ENCODE measurements at regions of chr5 and their contacts with region 1.

Region 1: GRCh38 chr5:174418928-174419796 is 305.2 kb upstream of the MSX2 start:
- DNase-seq: peak; percentile 87 to 93 (median 90)
- H3K4me3 ChIP-seq: peak overlapping the region in 1 of 7 experiments; percentile 11
- H3K27ac ChIP-seq: no peak overlapping the region
- H3K4me1 ChIP-seq: peaks cover 0 to 6% (median 0%) of the 10 kb centered on the region in 4 experiments
- H3K27me3 ChIP-seq: peaks cover 2 to 23% (median 10%) of the 10 kb centered on the region in 5 experiments

Region 2: DNA sequence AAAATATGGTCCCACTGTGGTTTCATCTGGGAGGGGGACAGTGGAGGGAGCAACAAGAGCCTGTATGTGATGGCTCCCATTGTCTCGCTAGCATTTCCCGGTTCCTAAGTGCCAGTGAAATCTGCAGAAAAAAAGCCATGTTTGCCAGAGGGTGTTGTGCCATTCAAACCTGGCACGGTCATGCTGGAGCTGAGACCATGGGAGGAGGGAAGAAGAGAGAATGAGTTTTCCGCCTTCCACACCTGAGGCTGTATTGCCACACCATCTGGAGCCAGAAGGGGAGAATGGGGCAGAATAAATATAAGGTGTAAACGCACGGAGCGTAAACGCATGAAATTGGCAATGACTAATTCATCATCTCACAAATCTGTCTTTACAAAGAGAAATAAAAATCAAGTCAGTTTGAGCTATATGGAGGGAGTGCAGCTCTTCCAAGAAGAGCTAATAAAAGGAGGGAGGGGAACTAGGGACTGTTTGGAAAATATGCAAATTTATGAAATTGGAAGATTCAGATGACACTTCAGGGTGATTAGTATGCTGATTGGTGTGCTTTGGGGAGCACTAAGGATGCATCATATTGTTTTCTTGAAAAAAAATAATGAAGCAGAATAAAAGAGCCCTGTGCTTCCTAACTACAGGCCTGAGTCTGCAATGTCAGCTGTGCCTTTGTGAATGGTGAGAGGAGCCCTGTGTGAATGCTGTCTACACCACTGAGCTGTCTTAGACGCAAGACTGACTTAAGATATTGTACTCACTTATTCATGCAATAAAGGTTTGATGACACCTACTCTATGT is 135.8 kb before region 1 on chr5:
- CTCF ChIA-PET with region 1: no interaction called
- POLR2A ChIA-PET with region 1: no interaction called
- DNase-seq: no peak
- H3K4me3 ChIP-seq: no peak overlapping the region
- H3K27ac ChIP-seq: no peak overlapping the region
- H3K4me1 ChIP-seq: no peaks in the 10 kb centered on the region
- H3K27me3 ChIP-seq: peaks cover 0 to 14% (median 0%) of the 10 kb centered on the region in 5 experiments

Region 3: DNA sequence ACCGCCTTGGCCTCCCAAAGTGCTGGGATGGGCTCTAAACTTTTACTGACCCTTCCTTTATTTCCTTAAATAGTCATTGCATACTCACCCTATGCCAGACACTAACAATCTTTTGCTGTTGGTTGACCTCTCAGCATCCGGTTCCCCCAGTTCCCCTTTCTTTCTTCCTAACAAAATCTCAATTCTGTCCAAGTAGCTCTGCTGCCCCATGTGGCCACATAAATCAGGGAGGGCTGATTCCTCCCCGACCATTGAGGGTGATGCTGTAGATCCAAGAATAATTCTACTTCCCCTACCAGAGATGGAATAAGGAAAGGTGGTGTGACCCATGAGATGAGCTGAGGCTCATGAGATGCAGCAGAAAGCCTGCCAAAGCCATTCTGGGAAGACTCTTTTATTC is 10.1 kb before region 1 on chr5:
- CTCF ChIA-PET with region 1: interaction called, 15 read pairs
- POLR2A ChIA-PET with region 1: no interaction called
- DNase-seq: peak; percentile 22 to 42 (median 34)
- H3K4me3 ChIP-seq: no peak overlapping the region
- H3K27ac ChIP-seq: no peak overlapping the region
- H3K4me1 ChIP-seq: no peaks in the 10 kb centered on the region
- H3K27me3 ChIP-seq: peaks cover 0 to 10% (median 7%) of the 10 kb centered on the region in 5 experiments

Region 4: DNA sequence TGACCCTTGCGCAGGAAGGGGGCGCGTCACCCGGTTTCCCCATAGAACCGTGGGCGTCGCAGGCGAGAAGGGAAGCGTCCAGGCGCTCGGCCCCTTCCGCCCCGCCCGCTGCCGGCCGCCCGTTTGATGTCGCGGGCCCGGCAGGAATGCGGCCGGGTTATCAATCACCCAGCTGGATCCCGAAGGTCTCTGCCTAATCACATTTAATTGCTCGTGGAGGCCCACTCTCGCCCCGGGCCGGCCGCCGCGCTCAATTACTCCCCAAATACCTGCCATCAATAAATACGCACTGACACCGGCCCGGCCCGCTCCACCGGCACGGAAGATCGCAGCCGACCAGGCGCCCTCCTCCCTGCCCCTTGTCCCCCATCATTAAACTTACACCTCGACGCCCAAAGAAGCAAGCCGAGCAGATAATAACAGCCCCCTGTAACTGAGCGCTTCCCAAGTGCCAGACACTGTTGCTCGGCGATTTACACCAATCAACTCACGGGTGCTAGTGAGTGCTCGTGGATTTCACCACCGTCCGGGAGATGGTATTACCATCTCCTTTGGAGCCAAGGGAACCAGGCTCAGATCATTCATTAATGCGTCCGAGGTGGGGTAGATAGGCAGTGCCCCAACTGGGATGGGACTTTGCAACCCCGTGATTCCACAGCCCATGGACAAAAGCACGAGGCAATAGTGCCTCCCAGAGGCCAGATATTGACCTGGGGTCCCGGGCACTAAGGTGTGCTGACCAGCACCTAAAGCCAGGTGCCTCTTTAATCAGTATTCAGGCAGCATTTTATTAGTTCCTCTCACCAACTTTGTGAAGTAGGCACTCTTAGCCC is 316.6 kb after region 1 on chr5:
- CTCF ChIA-PET with region 1: interaction called, 10 read pairs
- POLR2A ChIA-PET with region 1: no interaction called
- DNase-seq: peak in 1 of 3 donors; percentile 15
- H3K4me3 ChIP-seq: no peak overlapping the region
- H3K27ac ChIP-seq: no peak overlapping the region
- H3K4me1 ChIP-seq: peaks cover 0 to 9% (median 4%) of the 10 kb centered on the region in 4 experiments
- H3K27me3 ChIP-seq: peaks cover 0 to 93% (median 63%) of the 10 kb centered on the region in 5 experiments

Region 5: GRCh38 chr5:174793684-174794328 is 374.6 kb after region 1 on chr5:
- CTCF ChIA-PET with region 1: interaction called, 61 read pairs
- POLR2A ChIA-PET with region 1: no interaction called
- DNase-seq: peak; percentile 42 to 56 (median 52)
- H3K4me3 ChIP-seq: no peak overlapping the region
- H3K27ac ChIP-seq: no peak overlapping the region
- H3K4me1 ChIP-seq: no peaks in the 10 kb centered on the region
- H3K27me3 ChIP-seq: peaks cover 4 to 45% (median 14%) of the 10 kb centered on the region in 5 experiments

Measured in common myeloid progenitor, CD34-positive (primary cell).